GM12878 (cell line): ENCODE measurements at regions of chr1 and their contacts with region 1.

Region 1: GRCh38 chr1:181936768-181937581 is 124.5 kb downstream of the ZNF648 start:
- DNase-seq: peak; percentile 86
- ATAC-seq: peak; percentile 90
- H3K4me3 ChIP-seq: no peak overlapping the region
- H3K27ac ChIP-seq: peak overlapping the region; percentile 82
- H3K4me1 ChIP-seq: peaks cover 16% of the 10 kb centered on the region
- H3K27me3 ChIP-seq: no peaks in the 10 kb centered on the region
- CTCF ChIP-seq: peak; percentile 83 to 91 (median 84)
- EP300 ChIP-seq: peak; percentile 92 to 95
- POLR2A ChIP-seq: no peak
- RAD21 ChIP-seq: peak; percentile 95

Region 2: DNA sequence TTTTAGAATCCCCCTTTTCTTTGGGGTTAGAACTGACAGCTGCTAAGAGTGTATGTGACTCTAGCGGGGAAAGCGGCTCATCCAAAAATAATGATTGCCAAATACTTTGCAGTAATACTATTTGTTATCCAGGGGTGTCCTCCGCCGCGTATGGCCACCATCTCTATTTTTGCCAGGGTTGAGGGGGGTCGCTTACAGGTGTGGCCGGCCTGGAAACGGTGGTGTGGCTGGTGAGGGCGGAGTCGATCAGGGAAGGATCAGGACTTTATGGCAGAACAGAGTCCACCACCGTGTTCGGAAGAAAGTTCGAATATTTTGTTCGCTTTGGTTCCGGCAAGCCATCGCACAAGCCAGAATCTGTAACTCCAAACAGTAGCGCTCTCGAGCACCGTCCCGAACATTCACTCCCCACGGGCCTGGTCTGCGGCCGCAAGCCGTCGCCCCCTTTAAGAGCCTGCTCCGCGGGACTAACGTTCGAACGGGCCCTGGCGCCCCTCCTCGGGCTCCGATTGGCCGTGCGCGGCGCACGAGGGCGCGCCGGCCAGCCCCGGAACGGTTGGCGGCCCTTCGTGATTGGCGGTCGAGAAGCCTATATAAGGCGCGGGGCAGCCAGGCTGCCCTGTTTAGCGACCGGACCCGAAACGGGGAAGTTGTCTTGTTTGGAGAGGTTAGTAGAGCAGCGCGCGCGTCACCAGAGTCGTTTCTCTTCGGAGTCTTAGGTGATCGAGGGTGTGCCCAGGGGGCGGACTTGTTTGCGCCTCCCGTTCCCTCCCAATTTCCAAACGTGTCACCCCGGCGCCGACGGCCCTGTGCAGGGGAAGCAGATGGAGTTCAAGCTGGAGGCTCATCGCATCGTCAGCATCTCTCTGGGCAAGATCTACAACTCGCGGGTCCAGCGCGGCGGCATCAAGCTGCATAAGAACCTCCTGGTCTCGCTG is 848.6 kb before region 1 on chr1 and contains the start of gene IER5:
- CTCF ChIA-PET with region 1: no interaction called
- POLR2A ChIA-PET with region 1: no interaction called
- RAD21 ChIA-PET with region 1: no interaction called
- SMC1A ChIA-PET with region 1: no interaction called
- in situ Hi-C with region 1: no loop called
- intact Hi-C with region 1: loop called (anchors 10 kb)
- DNase-seq: peak; percentile 83
- ATAC-seq: peak; percentile 82
- H3K4me3 ChIP-seq: peak within 1 kb of the TSS; percentile 99
- H3K27ac ChIP-seq: peak within 1 kb of the TSS; percentile 97
- H3K4me1 ChIP-seq: peaks cover 13% of the 10 kb centered on the region; the same call in 1 of the 2 replicates
- H3K27me3 ChIP-seq: no peaks in the 10 kb centered on the region
- CTCF ChIP-seq: 0 out of 6 replicates have a peak, but pooled peaks of 1 of the 3 experiments have one; percentile 0
- EP300 ChIP-seq: 0 out of 4 replicates have a peak, but pooled peaks of 1 of the 2 experiments have one; percentile 15
- POLR2A ChIP-seq: peak; percentile 98
- RAD21 ChIP-seq: no peak
- polyA plus RNA-seq, gene IER5: 6.2 to 19.5 TPM

Region 3: GRCh38 chr1:181424786-181425403 is 512.1 kb before region 1 on chr1:
- CTCF ChIA-PET with region 1: interaction called, 47 read pairs
- POLR2A ChIA-PET with region 1: interaction called, 4 read pairs
- RAD21 ChIA-PET with region 1: interaction called, 41 read pairs
- SMC1A ChIA-PET with region 1: interaction called, 27 read pairs
- in situ Hi-C with region 1: no loop called
- intact Hi-C with region 1: loop called (anchors 2 kb)
- DNase-seq: no peak
- ATAC-seq: peak; percentile 71
- H3K4me3 ChIP-seq: no peak overlapping the region
- H3K27ac ChIP-seq: no peak overlapping the region
- H3K4me1 ChIP-seq: peaks cover 30% of the 10 kb centered on the region
- H3K27me3 ChIP-seq: no peaks in the 10 kb centered on the region; a peak in 2 of 4 replicates
- CTCF ChIP-seq: peak; percentile 87 to 100 (median 98)
- EP300 ChIP-seq: no peak
- POLR2A ChIP-seq: no peak
- RAD21 ChIP-seq: peak; percentile 91

Region 4: GRCh38 chr1:181497870-181498269 is 439.1 kb before region 1 on chr1:
- CTCF ChIA-PET with region 1: interaction called, 6 read pairs
- POLR2A ChIA-PET with region 1: interaction called, 5 read pairs
- RAD21 ChIA-PET with region 1: interaction called, 7 read pairs
- SMC1A ChIA-PET with region 1: interaction called, 260 read pairs
- in situ Hi-C with region 1: no loop called
- intact Hi-C with region 1: no loop called
- DNase-seq: no peak
- ATAC-seq: peak; percentile 83
- H3K4me3 ChIP-seq: no peak overlapping the region
- H3K27ac ChIP-seq: no peak overlapping the region
- H3K4me1 ChIP-seq: peaks cover 8% of the 10 kb centered on the region; the same call in 1 of the 2 replicates
- H3K27me3 ChIP-seq: no peaks in the 10 kb centered on the region
- CTCF ChIP-seq: peak in 2 of 3 experiments; percentile 37 to 40; a peak in 3 of 6 replicates
- EP300 ChIP-seq: no peak
- POLR2A ChIP-seq: no peak
- RAD21 ChIP-seq: peak; percentile 19; the same call in 1 of the 2 replicates

Region 5: GRCh38 chr1:181676269-181676668 is 260.7 kb before region 1 on chr1:
- CTCF ChIA-PET with region 1: interaction called, 19 read pairs
- POLR2A ChIA-PET with region 1: no interaction called
- RAD21 ChIA-PET with region 1: interaction called, 12 read pairs
- SMC1A ChIA-PET with region 1: interaction called, 10 read pairs
- in situ Hi-C with region 1: no loop called
- intact Hi-C with region 1: loop called (anchors 5 kb)
- DNase-seq: peak; percentile 11
- ATAC-seq: peak; percentile 91
- H3K4me3 ChIP-seq: no peak overlapping the region
- H3K27ac ChIP-seq: no peak overlapping the region
- H3K4me1 ChIP-seq: no peaks in the 10 kb centered on the region
- H3K27me3 ChIP-seq: no peaks in the 10 kb centered on the region
- CTCF ChIP-seq: peak; percentile 60 to 66 (median 60); a peak in 4 of 6 replicates
- EP300 ChIP-seq: no peak
- POLR2A ChIP-seq: no peak
- RAD21 ChIP-seq: peak; percentile 71

Region 6: DNA sequence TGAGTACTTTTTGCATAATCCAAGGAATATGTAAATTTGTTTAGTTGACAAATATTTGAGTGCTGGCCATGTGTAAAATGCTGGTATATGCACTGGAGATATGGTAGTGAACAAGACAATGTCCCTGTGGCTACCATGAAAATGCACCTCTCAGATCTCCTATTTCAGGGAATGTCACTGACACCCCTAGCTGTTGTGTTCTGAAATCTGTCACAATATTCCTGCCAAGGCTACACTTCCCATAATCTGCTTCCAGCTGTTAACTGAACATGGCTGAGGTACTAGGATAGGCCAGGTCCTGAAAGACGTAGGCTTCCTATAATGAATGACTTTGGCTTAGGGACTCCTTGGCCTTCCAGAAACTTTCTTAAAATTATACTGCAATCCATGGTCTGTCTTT is 73.2 kb before region 1 on chr1:
- CTCF ChIA-PET with region 1: no interaction called
- POLR2A ChIA-PET with region 1: no interaction called
- RAD21 ChIA-PET with region 1: no interaction called
- SMC1A ChIA-PET with region 1: no interaction called
- in situ Hi-C with region 1: no loop called
- intact Hi-C with region 1: no loop called
- DNase-seq: no peak
- ATAC-seq: no peak
- H3K4me3 ChIP-seq: no peak overlapping the region
- H3K27ac ChIP-seq: no peak overlapping the region
- H3K4me1 ChIP-seq: no peaks in the 10 kb centered on the region
- H3K27me3 ChIP-seq: no peaks in the 10 kb centered on the region
- CTCF ChIP-seq: no peak
- EP300 ChIP-seq: no peak
- POLR2A ChIP-seq: no peak
- RAD21 ChIP-seq: no peak

Region 7: GRCh38 chr1:181969902-181970301 is 32.9 kb after region 1 on chr1:
- CTCF ChIA-PET with region 1: interaction called, 3 read pairs
- POLR2A ChIA-PET with region 1: interaction called, 11 read pairs
- RAD21 ChIA-PET with region 1: no interaction called
- SMC1A ChIA-PET with region 1: interaction called, 3 read pairs
- in situ Hi-C with region 1: no loop called
- intact Hi-C with region 1: no loop called
- DNase-seq: no peak
- ATAC-seq: no peak
- H3K4me3 ChIP-seq: no peak overlapping the region
- H3K27ac ChIP-seq: no peak overlapping the region
- H3K4me1 ChIP-seq: no peaks in the 10 kb centered on the region
- H3K27me3 ChIP-seq: no peaks in the 10 kb centered on the region
- CTCF ChIP-seq: no peak
- EP300 ChIP-seq: no peak
- POLR2A ChIP-seq: no peak
- RAD21 ChIP-seq: no peak

Region 8: DNA sequence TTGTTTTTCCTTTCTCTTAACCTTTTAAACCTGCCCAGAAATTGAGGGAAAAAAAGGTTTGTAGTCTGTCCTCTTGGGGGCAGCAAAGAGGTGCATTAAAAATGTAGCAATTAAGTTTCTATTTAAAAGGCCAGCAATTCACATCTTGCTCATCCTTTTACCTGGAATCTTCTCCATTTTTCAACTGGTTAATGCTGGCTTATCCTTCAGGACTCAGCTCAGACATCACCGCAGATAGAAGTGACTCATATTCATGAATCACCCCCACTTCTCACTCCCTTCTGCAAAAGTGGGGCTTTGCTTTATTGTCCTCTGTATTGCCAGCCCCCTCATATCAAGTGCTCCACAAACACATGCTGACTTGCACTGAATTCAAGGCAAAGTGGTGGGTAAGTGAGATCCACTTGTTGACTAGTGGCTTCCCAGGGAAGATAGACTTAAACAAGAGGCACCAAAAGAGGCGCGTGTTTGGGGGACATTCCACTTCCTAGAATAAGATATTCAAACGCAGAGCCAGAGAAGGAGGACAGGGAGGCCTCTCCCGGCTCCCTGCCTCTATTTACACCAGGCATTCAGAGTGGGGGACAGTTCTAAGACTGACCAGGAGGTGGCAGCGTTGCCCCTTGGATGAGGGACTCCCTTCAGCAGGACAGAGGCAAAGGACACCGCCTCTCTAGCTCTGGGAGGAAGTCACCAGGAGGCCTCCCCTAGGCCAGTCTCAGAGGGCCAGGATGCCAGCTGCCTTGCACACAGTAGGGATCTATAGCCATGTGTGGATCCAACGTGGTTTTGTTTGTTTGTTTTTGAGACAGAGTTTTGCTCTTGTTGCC is 147.7 kb after region 1 on chr1:
- CTCF ChIA-PET with region 1: interaction called, 19 read pairs
- POLR2A ChIA-PET with region 1: no interaction called
- RAD21 ChIA-PET with region 1: interaction called, 10 read pairs
- SMC1A ChIA-PET with region 1: interaction called, 3 read pairs
- in situ Hi-C with region 1: no loop called
- intact Hi-C with region 1: no loop called
- DNase-seq: no peak
- ATAC-seq: peak; percentile 94
- H3K4me3 ChIP-seq: no peak overlapping the region
- H3K27ac ChIP-seq: no peak overlapping the region
- H3K4me1 ChIP-seq: no peaks in the 10 kb centered on the region
- H3K27me3 ChIP-seq: no peaks in the 10 kb centered on the region
- CTCF ChIP-seq: peak; percentile 67 to 75 (median 74)
- EP300 ChIP-seq: no peak
- POLR2A ChIP-seq: no peak
- RAD21 ChIP-seq: peak; percentile 89